Endothelial cell of umbilical vein (primary cell): ENCODE measurements at regions of chr14 and their contacts with region 1.

Region 1: DNA sequence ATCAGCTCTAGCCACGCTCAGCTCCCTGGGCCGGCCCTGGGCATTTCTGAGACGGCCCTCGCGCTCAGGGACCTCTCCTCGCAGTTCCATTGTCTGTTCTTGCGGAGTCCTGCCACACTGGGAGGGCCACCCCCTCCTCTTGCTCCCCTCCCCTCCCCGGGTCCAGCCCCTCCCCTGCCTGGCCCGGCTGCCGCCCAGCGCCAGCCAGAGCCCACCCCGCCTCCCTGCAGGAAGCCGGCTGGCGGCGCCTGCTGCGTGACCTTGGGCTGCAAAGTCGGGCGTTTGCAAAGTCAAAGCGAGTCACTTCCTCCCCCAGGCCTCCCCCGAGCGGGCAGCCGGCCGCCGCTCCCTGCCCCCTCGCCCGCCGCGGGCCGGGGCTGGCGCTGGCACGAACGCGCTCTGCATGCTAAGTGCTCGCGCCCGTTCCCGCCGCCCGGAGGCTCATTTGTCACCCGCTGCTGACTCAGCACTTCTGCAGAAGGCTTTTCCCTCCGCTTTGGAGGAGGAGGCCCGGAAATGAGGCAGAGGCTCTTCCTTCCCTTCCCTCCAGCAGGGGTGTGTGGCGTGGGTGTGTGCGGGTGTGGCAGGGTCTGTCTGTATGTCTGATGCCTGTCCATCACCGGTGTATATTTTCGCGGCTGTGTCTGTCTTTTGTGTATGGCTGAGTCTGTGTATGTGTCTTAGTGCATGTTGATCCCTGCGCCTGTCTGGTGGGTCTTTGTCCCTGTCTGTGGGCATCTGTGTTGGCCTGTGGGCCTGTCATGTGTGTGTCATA is 72.0 kb downstream of the IRF2BPL start:
- DNase-seq: peak; percentile 99
- H3K4me3 ChIP-seq: no peak overlapping the region
- H3K27ac ChIP-seq: peak overlapping the region; percentile 95
- H3K4me1 ChIP-seq: peaks cover 73% of the 10 kb centered on the region
- H3K27me3 ChIP-seq: no peaks in the 10 kb centered on the region
- CTCF ChIP-seq: no peak
- POLR2A ChIP-seq: peak; percentile 15

Region 2: GRCh38 chr14:77000340-77001270 is 44.1 kb after region 1 on chr14:
- CTCF ChIA-PET with region 1: interaction called, 4 read pairs
- POLR2A ChIA-PET with region 1: no interaction called
- dilution Hi-C with region 1: no loop called
- intact Hi-C with region 1: loop called (anchors 2 kb)
- DNase-seq: peak; percentile 67
- H3K4me3 ChIP-seq: no peak overlapping the region
- H3K27ac ChIP-seq: peak overlapping the region; percentile 8
- H3K4me1 ChIP-seq: peaks cover 3% of the 10 kb centered on the region
- H3K27me3 ChIP-seq: no peaks in the 10 kb centered on the region
- CTCF ChIP-seq: no peak
- POLR2A ChIP-seq: no peak

Region 3: GRCh38 chr14:77033622-77034521 is 77.4 kb after region 1 on chr14:
- CTCF ChIA-PET with region 1: no interaction called
- POLR2A ChIA-PET with region 1: interaction called, 6 read pairs
- dilution Hi-C with region 1: no loop called
- intact Hi-C with region 1: loop called (anchors 1 kb)
- DNase-seq: peak; percentile 93
- H3K4me3 ChIP-seq: peak overlapping the region; percentile 20 to 48 (median 26)
- H3K27ac ChIP-seq: peak overlapping the region; percentile 99
- H3K4me1 ChIP-seq: peaks cover 59% of the 10 kb centered on the region
- H3K27me3 ChIP-seq: no peaks in the 10 kb centered on the region
- CTCF ChIP-seq: no peak
- POLR2A ChIP-seq: peak; percentile 73

Region 4: GRCh38 chr14:77053046-77053841 is 96.7 kb after region 1 on chr14:
- CTCF ChIA-PET with region 1: interaction called, 9 read pairs
- POLR2A ChIA-PET with region 1: interaction called, 4 read pairs
- dilution Hi-C with region 1: no loop called
- intact Hi-C with region 1: loop called (anchors 1 kb)
- DNase-seq: peak; percentile 81
- H3K4me3 ChIP-seq: no peak overlapping the region
- H3K27ac ChIP-seq: peak overlapping the region; percentile 6
- H3K4me1 ChIP-seq: peaks cover 11% of the 10 kb centered on the region
- H3K27me3 ChIP-seq: no peaks in the 10 kb centered on the region
- CTCF ChIP-seq: peak; percentile 95 to 96
- POLR2A ChIP-seq: no peak

Region 5: DNA sequence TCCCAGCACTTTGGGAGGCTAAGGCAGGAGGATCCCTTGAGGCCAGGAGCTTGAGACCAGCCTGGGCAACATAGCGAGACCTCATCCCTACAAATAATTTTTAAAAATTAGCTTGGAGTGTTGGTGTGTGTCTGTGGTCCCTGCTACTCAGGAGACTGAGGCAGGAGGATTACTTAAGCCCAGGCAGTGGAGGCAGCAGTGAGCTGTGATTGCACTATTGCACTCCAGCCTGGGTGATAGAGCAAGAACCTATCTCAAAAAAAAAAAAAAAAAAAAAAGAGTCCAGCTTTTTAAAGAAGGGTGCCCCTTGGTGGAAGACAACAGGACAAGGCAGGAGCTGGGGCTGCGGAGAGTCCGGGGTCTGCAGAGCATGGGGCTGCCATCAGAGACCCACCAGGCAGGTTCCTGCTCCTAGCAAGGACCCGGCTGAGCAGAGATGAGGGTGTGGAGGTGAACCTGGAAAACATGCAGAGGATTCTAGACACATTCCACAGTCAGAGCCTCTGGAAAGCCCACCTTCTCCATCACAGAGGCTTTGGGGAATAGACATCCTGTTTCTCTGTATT is 120.5 kb after region 1 on chr14:
- CTCF ChIA-PET with region 1: no interaction called
- POLR2A ChIA-PET with region 1: no interaction called
- dilution Hi-C with region 1: no loop called
- intact Hi-C with region 1: no loop called
- DNase-seq: no peak
- H3K4me3 ChIP-seq: no peak overlapping the region
- H3K27ac ChIP-seq: peak overlapping the region; percentile 86
- H3K4me1 ChIP-seq: peaks cover 14% of the 10 kb centered on the region
- H3K27me3 ChIP-seq: no peaks in the 10 kb centered on the region
- CTCF ChIP-seq: no peak
- POLR2A ChIP-seq: no peak

Region 6: DNA sequence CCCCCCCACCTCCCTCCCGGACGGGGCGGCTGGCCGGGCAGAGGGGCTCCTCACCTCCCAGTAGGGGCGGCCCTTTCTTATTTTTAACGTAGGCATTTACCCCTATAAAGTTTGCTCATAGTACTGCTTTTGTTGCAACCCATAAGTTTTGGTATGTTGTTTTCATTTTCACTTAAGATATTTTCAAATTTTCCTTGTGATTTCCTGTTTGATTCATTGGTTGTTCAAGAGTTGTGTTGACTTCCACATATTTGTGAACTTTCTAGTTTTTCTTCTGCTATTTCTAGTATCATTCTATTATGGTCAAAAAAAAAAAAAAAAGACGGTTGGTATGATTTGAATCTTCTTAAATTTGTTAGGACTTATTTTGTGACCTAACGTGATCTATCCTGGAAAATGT is 460.3 kb after region 1 on chr14:
- CTCF ChIA-PET with region 1: no interaction called
- POLR2A ChIA-PET with region 1: no interaction called
- dilution Hi-C with region 1: no loop called
- intact Hi-C with region 1: no loop called
- DNase-seq: no peak
- H3K4me3 ChIP-seq: no peak overlapping the region
- H3K27ac ChIP-seq: no peak overlapping the region
- H3K4me1 ChIP-seq: no peaks in the 10 kb centered on the region
- H3K27me3 ChIP-seq: no peaks in the 10 kb centered on the region
- CTCF ChIP-seq: no peak
- POLR2A ChIP-seq: no peak

Region 7: GRCh38 chr14:77616454-77617229 is 660.1 kb after region 1 on chr14 and contains the start of gene SPTLC2:
- CTCF ChIA-PET with region 1: no interaction called
- POLR2A ChIA-PET with region 1: no interaction called
- dilution Hi-C with region 1: no loop called
- intact Hi-C with region 1: loop called (anchors 10 kb)
- DNase-seq: peak; percentile 100
- H3K4me3 ChIP-seq: peak within 1 kb of the TSS; percentile 86 to 94 (median 90)
- H3K27ac ChIP-seq: peak within 1 kb of the TSS; percentile 14
- H3K4me1 ChIP-seq: peaks cover 25% of the 10 kb centered on the region
- H3K27me3 ChIP-seq: peaks cover 0 to 4% of the 10 kb centered on the region in 2 experiments
- CTCF ChIP-seq: no peak
- POLR2A ChIP-seq: peak; percentile 76
- total RNA-seq, gene SPTLC2: 57.2 and 71.3 TPM in 2 replicates